Sigmoid colon (tissue), 7 donors: ENCODE measurements at regions of chr3 and their contacts with region 1.

Region 1: DNA sequence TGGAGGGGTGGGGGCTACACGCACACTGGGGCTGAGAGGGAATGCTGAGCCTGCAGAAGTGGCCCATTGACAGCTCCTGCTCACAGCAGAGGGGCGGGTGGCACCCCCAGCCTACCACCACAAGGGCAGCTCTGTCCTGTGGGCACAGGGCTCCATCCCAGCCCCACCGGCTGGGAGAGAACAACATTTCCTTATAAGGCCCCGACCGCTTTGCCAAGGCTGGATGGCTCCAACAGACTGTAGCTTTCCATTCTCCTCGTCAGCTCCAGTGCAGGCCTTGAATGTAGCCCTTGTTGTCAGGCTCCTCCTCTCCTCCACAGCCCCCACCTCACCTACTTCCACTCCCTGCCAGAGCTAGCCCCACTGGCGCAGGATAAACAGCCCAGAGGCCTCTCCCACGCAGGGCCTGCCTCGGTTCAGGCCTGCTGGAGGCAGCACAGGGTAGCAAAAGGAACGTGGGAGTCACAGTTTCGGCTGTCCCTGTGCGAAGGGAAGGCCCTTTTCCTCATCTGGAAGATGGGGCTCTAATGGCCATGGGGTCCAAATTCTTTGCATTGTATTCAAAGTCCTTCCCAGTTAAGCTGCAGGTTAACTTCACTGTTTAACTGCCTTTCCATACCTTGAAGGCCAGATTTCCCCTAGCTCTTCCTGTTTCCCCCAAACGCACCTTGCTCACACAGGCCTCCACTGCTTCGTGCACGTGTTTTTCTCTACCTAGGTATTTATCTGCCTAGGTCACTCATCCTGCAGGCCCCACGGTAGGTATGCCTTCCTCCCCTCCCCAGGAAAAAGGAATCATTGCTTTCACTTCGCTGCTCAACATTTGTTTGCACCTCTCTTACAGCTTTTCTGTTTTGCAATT is 101.6 kb upstream of the LPP start:
- DNase-seq: peak; percentile 99
- H3K4me3 ChIP-seq: peak overlapping the region in 3 of 4 donors; percentile 10 to 13 (median 12)
- H3K27ac ChIP-seq: peak overlapping the region; percentile 87 to 96 (median 90)
- H3K4me1 ChIP-seq: peaks cover 0 to 38% (median 37%) of the 10 kb centered on the region in 4 donors
- H3K27me3 ChIP-seq: no peaks in the 10 kb centered on the region
- CTCF ChIP-seq: peak; percentile 67 to 86 (median 72)
- EP300 ChIP-seq: peak; percentile 22 to 94 (median 61)
- POLR2A ChIP-seq: no peak

Region 2: GRCh38 chr3:187738331-187739093 is 313.9 kb before region 1 on chr3:
- intact Hi-C with region 1: loop called (anchors 2 kb)
- DNase-seq: peak; percentile 97
- H3K4me3 ChIP-seq: peak overlapping the region; percentile 53 to 88 (median 68)
- H3K27ac ChIP-seq: peak overlapping the region; percentile 90 to 99 (median 96)
- H3K4me1 ChIP-seq: peaks cover 0 to 76% (median 43%) of the 10 kb centered on the region in 4 donors
- H3K27me3 ChIP-seq: no peaks in the 10 kb centered on the region
- CTCF ChIP-seq: peak; percentile 55 to 72 (median 64)
- EP300 ChIP-seq: peak in 2 of 4 donors; percentile 24 to 45
- POLR2A ChIP-seq: peak; percentile 23 to 34

Region 3: GRCh38 chr3:187913617-187914291 is 138.6 kb before region 1 on chr3:
- intact Hi-C with region 1: loop called (anchors 5 kb)
- DNase-seq: no peak
- H3K4me3 ChIP-seq: no peak overlapping the region
- H3K27ac ChIP-seq: peak overlapping the region; percentile 13 to 73 (median 53)
- H3K4me1 ChIP-seq: peaks cover 0 to 47% (median 42%) of the 10 kb centered on the region in 4 donors
- H3K27me3 ChIP-seq: no peaks in the 10 kb centered on the region
- CTCF ChIP-seq: no peak
- EP300 ChIP-seq: no peak
- POLR2A ChIP-seq: no peak

Region 4: DNA sequence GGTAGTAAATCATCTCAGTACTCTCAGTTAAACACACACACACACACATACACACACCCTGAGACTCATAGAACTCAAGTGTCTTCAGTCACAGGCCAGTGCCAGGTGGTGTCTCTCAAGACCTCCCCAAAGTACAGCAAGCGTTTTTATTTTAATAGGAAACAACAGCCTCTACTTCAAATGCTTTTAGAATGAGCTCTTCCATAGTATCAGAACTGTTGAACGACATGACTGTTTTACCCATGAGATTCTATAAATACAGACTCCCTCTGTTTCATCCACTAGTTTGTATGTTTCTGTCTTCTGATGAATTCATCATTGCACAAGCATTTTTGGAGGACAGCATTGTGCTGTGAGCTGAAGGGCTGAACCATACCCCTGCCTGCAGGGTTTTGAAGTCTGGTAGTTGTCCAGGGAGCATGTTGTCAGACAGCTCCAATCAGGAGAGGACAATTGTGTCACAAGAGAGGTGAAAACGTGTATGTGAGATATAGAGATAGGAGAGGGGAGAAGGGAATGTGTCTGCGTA is 106.2 kb before region 1 on chr3:
- intact Hi-C with region 1: no loop called
- DNase-seq: no peak
- H3K4me3 ChIP-seq: no peak overlapping the region
- H3K27ac ChIP-seq: no peak overlapping the region
- H3K4me1 ChIP-seq: no peaks in the 10 kb centered on the region
- H3K27me3 ChIP-seq: no peaks in the 10 kb centered on the region
- CTCF ChIP-seq: no peak
- EP300 ChIP-seq: no peak
- POLR2A ChIP-seq: no peak

Region 5: DNA sequence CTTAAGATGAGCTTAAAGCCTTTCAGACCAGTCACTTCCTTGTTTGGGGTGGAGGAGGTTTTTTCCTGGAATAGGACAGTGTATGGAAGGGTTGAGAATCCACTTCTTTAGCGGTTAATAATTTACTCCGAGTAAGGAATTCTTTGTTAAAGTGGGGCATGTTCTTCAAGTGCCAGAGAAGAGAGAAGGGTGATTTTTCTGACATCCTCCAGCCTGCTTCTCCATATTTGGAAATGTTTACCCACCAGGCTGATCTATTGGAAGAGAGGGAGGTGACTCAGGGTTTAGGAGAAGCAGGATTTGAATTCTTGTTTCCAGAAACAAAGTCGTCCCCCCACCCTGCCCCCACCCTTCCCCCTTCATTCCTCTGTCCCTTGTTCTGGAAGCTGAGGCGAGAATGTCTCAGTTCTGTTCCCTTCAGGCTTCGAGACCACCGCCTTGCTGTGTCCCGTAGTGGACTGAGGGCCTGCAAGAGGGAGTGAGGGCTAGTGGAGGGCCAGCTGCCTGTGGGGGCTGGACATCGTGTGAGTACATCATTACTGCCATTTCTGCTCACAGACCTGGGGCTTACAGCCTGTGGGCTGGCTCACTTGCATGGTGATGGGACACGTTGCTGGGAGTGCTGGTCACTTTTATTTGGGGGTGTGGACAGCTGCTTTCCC is 160.0 kb after region 1 on chr3:
- intact Hi-C with region 1: loop called (anchors 5 kb)
- DNase-seq: peak; percentile 83
- H3K4me3 ChIP-seq: peak overlapping the region; percentile 41 to 56 (median 47)
- H3K27ac ChIP-seq: peak overlapping the region; percentile 84 to 97 (median 93)
- H3K4me1 ChIP-seq: peaks cover 0 to 70% (median 54%) of the 10 kb centered on the region in 4 donors
- H3K27me3 ChIP-seq: no peaks in the 10 kb centered on the region
- CTCF ChIP-seq: no peak
- EP300 ChIP-seq: peak; percentile 66 to 92 (median 80)
- POLR2A ChIP-seq: peak; percentile 32 to 51

Region 6: DNA sequence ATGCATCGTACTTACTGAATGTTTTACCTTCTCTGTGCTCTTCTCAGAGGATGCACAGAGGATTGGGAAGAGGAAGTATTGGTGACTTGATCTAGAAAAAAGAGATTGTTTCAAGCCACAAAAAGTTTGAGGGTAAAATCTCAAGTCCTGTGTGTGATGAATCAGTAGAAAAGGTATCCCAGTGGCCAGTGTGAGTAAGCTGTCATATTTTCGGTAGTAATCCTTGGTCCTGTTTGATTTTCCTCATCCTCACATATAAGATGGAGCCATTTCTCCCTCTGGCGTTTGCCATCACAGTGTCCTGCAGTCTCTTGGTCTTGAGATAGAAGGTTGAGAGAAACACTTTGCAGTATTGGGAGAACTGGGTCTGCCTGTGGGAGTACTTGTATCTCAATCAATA is 268.4 kb after region 1 on chr3:
- intact Hi-C with region 1: loop called (anchors 10 kb)
- DNase-seq: no peak
- H3K4me3 ChIP-seq: no peak overlapping the region
- H3K27ac ChIP-seq: peak overlapping the region in 3 of 4 donors; percentile 18 to 81 (median 49)
- H3K4me1 ChIP-seq: peaks cover 0 to 78% (median 61%) of the 10 kb centered on the region in 4 donors
- H3K27me3 ChIP-seq: no peaks in the 10 kb centered on the region
- CTCF ChIP-seq: no peak
- EP300 ChIP-seq: no peak
- POLR2A ChIP-seq: no peak

Region 7: DNA sequence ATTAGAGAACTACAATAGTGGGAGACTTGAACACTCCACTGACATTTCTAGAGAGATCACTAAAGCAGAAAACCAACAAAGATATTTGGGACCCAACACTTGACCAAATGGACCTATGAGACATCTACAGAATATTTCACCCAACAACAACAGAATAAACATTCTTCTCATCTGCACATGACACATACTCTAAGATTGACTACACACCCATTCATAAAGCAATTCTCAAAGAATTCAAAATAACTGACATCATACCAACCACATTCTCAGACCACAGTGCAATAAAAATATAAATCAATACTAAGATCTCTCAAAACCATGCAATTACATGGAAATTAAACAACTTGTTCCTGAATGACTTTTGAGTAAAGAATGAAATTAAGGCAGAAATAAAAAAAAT is 575.3 kb after region 1 on chr3:
- intact Hi-C with region 1: loop called (anchors 10 kb)
- DNase-seq: no peak
- H3K4me3 ChIP-seq: no peak overlapping the region
- H3K27ac ChIP-seq: peak overlapping the region in 1 of 4 donors; percentile 72
- H3K4me1 ChIP-seq: peaks cover 0 to 42% (median 27%) of the 10 kb centered on the region in 4 donors
- H3K27me3 ChIP-seq: no peaks in the 10 kb centered on the region
- CTCF ChIP-seq: no peak
- EP300 ChIP-seq: no peak
- POLR2A ChIP-seq: no peak